OCI-LY7 (cell line): ENCODE measurements at regions of chr9 and their contacts with region 1.

Region 1: DNA sequence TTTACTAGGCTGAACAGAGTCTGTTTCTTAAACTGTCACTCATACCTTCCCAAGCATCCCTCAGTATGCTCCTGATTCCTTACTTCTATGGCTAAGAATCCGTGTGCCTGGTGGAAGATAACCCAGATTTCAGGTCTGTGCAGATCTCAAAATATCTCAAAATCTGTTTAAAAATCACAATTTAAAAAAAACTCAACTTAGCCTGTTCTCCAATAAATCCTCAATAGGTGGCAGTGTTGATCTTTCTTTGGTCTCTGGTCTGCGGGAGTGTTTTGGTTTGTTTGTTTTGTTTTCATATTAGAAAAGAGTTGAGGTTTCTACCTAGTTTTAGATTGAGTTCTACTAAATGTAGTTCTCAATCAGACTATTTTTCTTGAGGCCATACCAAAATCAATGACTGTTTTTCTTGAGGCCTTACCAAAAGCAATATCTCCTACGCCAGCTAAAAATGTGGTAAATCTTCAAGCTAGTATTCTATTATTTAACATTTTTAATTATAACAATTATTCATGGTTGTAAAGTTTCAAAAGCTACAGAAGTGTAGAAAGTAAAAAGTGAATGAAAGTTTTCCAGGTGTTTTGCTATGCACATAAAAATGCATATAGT is 57.9 kb downstream of the TGFBR1 start:
- DNase-seq: peak; percentile 56
- H3K4me3 ChIP-seq: no peak overlapping the region
- H3K27ac ChIP-seq: no peak overlapping the region
- H3K4me1 ChIP-seq: no peaks in the 10 kb centered on the region
- CTCF ChIP-seq: peak; percentile 96

Region 2: DNA sequence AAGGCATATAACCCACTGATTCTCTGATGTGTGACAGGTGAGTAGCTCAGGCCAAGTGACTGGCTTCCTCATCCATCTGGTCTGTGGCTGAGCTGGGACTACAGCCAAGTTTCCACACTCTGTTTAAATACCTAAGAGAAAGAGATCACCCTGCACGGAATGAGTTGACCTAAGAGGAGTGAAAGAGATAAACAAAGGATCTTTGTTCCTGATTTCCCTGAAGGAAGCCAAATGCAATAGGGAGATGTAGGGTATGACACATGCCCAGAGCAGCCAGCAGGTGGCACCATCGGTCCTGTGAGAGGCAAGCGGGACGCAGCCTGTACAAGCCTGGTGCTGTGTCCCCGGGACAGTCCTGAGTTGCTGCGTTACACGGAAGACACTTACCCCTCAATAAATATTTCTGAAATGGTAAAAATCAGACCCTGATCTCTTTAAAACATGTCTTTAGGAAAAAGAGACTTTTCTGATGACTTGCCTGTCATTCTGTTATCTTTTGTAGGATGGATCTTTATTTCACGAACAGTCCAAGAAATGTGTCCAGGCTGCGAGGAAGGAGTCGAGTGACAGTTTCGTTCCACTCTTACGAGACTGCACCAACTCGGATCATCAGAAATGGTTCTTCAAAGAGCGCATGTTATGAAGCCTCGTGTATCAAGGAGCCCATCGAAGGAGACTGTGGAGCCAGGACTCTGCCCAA is 314.3 kb before region 1 on chr9:
- CTCF ChIA-PET with region 1: no interaction called
- POLR2A ChIA-PET with region 1: no interaction called
- intact Hi-C with region 1: loop called (anchors 5 kb)
- DNase-seq: peak; percentile 76
- H3K4me3 ChIP-seq: no peak overlapping the region
- H3K27ac ChIP-seq: no peak overlapping the region
- H3K4me1 ChIP-seq: no peaks in the 10 kb centered on the region
- CTCF ChIP-seq: peak; percentile 94

Region 3: DNA sequence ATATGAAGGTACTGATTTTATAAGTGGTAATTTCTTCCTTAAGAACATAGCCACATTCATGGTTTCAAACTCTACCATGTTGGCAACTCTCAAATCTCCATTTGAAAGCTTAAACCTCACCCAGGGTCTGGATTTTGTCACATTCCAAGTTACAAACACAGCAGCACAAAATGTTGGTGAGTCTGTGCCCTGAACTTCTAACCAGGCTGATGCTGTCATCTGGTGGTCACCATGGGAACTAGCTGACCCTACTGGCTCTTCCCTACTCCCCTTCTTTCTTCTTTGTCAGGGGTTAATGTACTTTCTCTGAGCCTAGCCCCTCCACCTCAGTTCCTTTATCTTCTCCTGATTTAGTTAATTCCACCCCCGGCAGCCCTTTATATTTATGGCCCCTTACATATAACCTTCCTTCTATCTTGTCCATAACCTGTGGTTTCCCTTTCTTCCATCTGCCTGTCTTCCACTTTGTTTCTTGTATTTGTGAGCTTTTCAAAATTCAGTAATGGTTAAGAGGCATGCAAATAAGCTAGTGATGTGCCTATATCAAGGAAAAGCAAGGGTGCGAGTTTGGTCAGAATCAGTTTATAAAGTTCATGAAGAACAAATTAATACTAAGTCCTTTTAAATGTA is 22.1 kb before region 1 on chr9:
- CTCF ChIA-PET with region 1: no interaction called
- POLR2A ChIA-PET with region 1: no interaction called
- intact Hi-C with region 1: no loop called
- DNase-seq: peak; percentile 69
- H3K4me3 ChIP-seq: no peak overlapping the region
- H3K27ac ChIP-seq: no peak overlapping the region
- H3K4me1 ChIP-seq: peaks cover 17% of the 10 kb centered on the region
- CTCF ChIP-seq: peak; percentile 96

Region 4: GRCh38 chr9:99199938-99200539 is 37.2 kb after region 1 on chr9:
- CTCF ChIA-PET with region 1: no interaction called
- POLR2A ChIA-PET with region 1: interaction called, 10 read pairs
- intact Hi-C with region 1: no loop called
- DNase-seq: no peak
- H3K4me3 ChIP-seq: no peak overlapping the region
- H3K27ac ChIP-seq: no peak overlapping the region
- H3K4me1 ChIP-seq: no peaks in the 10 kb centered on the region
- CTCF ChIP-seq: no peak

Region 5: GRCh38 chr9:99807276-99807852 is 644.5 kb after region 1 on chr9:
- CTCF ChIA-PET with region 1: no interaction called
- POLR2A ChIA-PET with region 1: no interaction called
- intact Hi-C with region 1: loop called (anchors 10 kb)
- DNase-seq: peak; percentile 70
- H3K4me3 ChIP-seq: no peak overlapping the region
- H3K27ac ChIP-seq: no peak overlapping the region
- H3K4me1 ChIP-seq: no peaks in the 10 kb centered on the region
- CTCF ChIP-seq: peak; percentile 95